ENCODE measurements at regions of chr17 and their contacts with region 1.

Region 1: GRCh38 chr17:66386498-66387365 is 84.3 kb downstream of the PRKCA start:
- DNase-seq: no peak
- ATAC-seq: no peak
- H3K4me3 ChIP-seq: no peak overlapping the region
- H3K4me3 Mint-ChIP-seq: no peak overlapping the region
- H3K27ac ChIP-seq: no peak overlapping the region
- H3K27ac Mint-ChIP-seq: peak overlapping the region; percentile 3
- H3K4me1 ChIP-seq: peaks cover 12% of the 10 kb centered on the region
- H3K4me1 Mint-ChIP-seq: peaks cover 73% of the 10 kb centered on the region
- H3K27me3 ChIP-seq: no peaks in the 10 kb centered on the region
- H3K27me3 Mint-ChIP-seq: no peaks in the 10 kb centered on the region
- CTCF ChIP-seq: no peak

Region 2: DNA sequence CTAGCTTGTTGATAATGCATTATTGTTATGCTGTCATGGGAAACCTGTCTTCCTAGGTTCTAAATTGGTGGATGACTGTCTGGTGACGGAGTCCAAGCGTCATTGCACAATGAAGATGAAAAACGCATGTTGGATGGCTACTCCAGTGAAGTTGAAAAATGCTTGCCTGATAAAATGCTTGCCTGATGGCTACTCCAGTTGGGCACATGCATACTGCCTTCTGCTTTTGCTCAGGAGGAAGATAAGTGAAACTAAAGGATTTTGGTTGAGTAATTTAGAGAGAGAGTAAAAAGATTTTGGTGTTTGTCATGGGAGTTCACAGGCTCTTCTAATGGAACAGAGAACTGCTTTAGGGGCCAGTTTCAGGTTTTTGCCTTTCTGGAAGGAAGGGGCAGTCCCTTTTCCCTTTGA is 34.2 kb after region 1 on chr17:
- CTCF ChIA-PET with region 1: no interaction called
- POLR2A ChIA-PET with region 1: no interaction called
- intact Hi-C with region 1: loop called in 1 of 2 experiments (anchors 5 kb)
- DNase-seq: no peak
- ATAC-seq: no peak
- H3K4me3 ChIP-seq: no peak overlapping the region
- H3K4me3 Mint-ChIP-seq: no peak overlapping the region
- H3K27ac ChIP-seq: no peak overlapping the region
- H3K27ac Mint-ChIP-seq: peak overlapping the region; percentile 25
- H3K4me1 ChIP-seq: peaks cover 15% of the 10 kb centered on the region
- H3K4me1 Mint-ChIP-seq: peaks cover 64% of the 10 kb centered on the region
- H3K27me3 ChIP-seq: no peaks in the 10 kb centered on the region
- H3K27me3 Mint-ChIP-seq: no peaks in the 10 kb centered on the region
- CTCF ChIP-seq: no peak

Measured in CD4-positive, alpha-beta T cell (primary cell).